ENCODE measurements at regions of chr17 and their contacts with region 1.

Region 1: GRCh38 chr17:74961657-74962490 is 10.7 kb downstream of the HID1 start:
- DNase-seq: peak; percentile 86 to 97 (median 91)
- H3K4me3 ChIP-seq: no peak overlapping the region
- H3K27ac ChIP-seq: no peak overlapping the region
- H3K4me1 ChIP-seq: no peaks in the 10 kb centered on the region
- H3K27me3 ChIP-seq: no peaks in the 10 kb centered on the region
- CTCF ChIP-seq: peak; percentile 73 to 88 (median 86)
- POLR2A ChIP-seq: no peak

Region 2: DNA sequence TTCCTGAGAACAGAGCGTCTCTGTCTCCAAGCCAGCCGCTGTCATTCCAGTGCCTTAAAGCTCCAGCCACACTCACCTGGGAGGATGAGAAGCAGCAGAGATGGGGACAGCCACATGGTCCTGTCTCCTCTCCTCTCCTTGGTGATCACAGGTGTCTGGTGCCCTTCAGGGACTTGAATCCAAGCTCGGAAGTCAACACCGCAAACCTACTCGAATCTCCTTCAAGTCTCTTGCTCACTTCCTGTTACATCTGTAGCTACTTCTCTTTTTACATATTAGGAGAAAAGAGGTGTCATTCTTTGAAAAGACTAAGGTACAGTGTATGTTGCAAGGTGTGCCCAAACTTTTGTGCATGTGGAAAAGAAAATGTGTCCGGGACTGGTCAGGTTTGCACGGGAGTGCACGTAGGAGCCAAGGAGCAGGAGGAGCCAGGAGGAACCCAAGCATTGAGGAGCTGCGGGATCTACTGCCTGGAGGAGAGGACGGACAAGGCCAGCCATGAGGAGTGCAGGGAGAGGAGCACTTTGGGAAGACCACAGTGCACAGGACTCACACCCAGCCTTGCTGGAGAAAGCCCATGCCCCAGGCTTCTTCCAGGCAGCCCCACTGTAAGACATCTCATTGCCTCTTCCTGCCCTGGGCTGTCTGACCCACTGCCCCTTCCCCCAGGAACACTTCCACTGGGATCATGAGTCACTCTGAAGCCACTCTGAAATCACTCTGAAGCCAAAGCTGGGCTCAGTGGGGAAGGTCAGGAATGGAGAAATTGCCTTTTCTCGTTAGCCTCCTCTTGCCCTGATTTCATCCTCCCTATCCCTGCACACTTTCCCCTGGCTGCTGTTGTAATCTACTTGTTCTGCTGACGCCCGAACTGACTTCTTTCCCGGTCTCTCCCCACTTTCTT is 369.5 kb before region 1 on chr17 and contains the start of gene CD300LD:
- intact Hi-C with region 1: no loop called
- DNase-seq: no peak
- H3K4me3 ChIP-seq: no peak within 1 kb of the TSS
- H3K27ac ChIP-seq: no peak within 1 kb of the TSS
- H3K4me1 ChIP-seq: no peaks in the 10 kb centered on the region
- H3K27me3 ChIP-seq: peaks cover 5% of the 10 kb centered on the region
- CTCF ChIP-seq: no peak
- POLR2A ChIP-seq: no peak
- total RNA-seq, gene CD300LD: not detected

Region 3: DNA sequence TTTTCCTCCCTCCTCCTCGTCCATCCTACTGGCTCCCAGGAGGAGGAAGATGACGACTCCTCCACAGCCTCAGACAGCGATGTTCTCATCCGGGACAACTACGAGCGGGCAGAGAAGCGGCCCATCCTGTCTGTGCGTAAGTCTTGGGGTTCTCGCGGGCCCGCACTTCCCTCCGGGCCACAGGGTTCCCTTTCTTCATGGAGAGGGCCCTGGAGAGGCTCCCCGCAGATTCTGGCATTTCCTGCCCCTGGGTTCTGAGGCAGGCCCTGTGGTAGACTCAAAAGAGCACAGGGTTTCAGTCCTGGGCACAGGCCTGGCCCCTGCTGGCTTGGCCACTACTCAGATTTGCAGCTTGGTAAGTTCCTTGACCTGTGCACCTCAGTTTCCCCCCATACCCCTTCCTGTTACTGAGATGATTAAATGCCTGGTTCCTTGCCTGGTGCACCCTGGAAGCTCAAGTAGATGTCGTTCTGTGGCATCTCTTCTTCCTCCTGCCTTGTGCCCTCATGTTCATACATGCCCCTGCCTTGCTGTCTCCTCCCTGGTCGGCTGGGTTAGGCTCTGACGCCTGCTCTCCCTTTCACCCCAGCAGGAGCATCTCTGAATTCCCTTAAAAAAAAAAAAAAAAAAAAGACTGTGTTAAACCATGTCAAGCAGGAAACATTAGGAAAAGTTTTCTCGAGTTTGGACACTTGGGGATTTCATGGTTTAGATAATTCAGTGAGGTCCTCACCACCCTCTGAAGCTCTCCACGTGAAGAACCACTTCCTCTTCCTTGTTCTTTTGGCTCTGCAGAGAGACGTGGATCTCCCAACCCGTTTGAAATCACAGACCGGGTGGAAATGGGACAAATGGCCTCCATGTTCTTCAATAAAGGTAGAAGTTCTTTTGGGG is 171.5 kb before region 1 on chr17:
- intact Hi-C with region 1: loop called (anchors 5 to 10 kb)
- DNase-seq: no peak
- H3K4me3 ChIP-seq: no peak overlapping the region
- H3K27ac ChIP-seq: no peak overlapping the region
- H3K4me1 ChIP-seq: no peaks in the 10 kb centered on the region
- H3K27me3 ChIP-seq: no peaks in the 10 kb centered on the region
- CTCF ChIP-seq: no peak
- POLR2A ChIP-seq: no peak

Region 4: DNA sequence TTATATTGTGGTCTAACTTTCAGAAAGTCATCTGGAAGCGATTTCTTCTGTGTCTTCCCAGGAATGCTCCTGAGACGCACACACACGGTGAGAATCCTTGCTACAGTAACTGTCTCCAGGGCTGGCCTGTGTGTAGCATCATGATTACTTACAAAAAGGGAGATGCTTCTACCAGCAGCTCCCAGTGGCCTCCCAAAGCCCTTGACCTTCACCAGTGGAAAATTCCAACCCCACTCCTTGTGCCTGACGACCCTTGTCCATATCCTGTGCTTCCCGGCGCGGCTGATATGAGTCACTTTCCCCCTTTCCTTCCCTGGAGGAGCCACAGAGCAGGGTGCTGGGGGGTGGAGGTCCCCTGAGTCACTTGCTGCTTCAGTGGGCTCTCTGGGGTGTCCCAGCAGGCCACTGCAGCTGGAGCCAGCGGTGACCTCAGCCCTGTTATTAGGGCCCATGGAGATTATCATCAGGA is 163.6 kb before region 1 on chr17:
- intact Hi-C with region 1: loop called (anchors 5 to 10 kb)
- DNase-seq: peak in 1 of 7 donors; percentile 25
- H3K4me3 ChIP-seq: no peak overlapping the region
- H3K27ac ChIP-seq: no peak overlapping the region
- H3K4me1 ChIP-seq: peaks cover 0 to 3% of the 10 kb centered on the region in 2 donors
- H3K27me3 ChIP-seq: no peaks in the 10 kb centered on the region
- CTCF ChIP-seq: no peak
- POLR2A ChIP-seq: no peak

Region 5: GRCh38 chr17:74923533-74924249 is 38.2 kb before region 1 on chr17:
- intact Hi-C with region 1: loop called (anchors 5 kb)
- DNase-seq: peak; percentile 56 to 81 (median 75)
- H3K4me3 ChIP-seq: peak overlapping the region in 2 of 4 donors; percentile 24 to 65
- H3K27ac ChIP-seq: no peak overlapping the region
- H3K4me1 ChIP-seq: peaks cover 13 to 20% of the 10 kb centered on the region in 2 donors
- H3K27me3 ChIP-seq: peaks cover 24% of the 10 kb centered on the region
- CTCF ChIP-seq: peak; percentile 50 to 88 (median 72)
- POLR2A ChIP-seq: no peak

Region 6: GRCh38 chr17:75006653-75007052 is 44.8 kb after region 1 on chr17:
- intact Hi-C with region 1: loop called (anchors 5 kb)
- DNase-seq: peak in 4 of 7 donors; percentile 31 to 55 (median 45)
- H3K4me3 ChIP-seq: no peak overlapping the region
- H3K27ac ChIP-seq: no peak overlapping the region
- H3K4me1 ChIP-seq: peaks cover 0 to 4% of the 10 kb centered on the region in 2 donors
- H3K27me3 ChIP-seq: no peaks in the 10 kb centered on the region
- CTCF ChIP-seq: peak in 5 of 6 experiments; percentile 21 to 41 (median 34)
- POLR2A ChIP-seq: no peak

Region 7: DNA sequence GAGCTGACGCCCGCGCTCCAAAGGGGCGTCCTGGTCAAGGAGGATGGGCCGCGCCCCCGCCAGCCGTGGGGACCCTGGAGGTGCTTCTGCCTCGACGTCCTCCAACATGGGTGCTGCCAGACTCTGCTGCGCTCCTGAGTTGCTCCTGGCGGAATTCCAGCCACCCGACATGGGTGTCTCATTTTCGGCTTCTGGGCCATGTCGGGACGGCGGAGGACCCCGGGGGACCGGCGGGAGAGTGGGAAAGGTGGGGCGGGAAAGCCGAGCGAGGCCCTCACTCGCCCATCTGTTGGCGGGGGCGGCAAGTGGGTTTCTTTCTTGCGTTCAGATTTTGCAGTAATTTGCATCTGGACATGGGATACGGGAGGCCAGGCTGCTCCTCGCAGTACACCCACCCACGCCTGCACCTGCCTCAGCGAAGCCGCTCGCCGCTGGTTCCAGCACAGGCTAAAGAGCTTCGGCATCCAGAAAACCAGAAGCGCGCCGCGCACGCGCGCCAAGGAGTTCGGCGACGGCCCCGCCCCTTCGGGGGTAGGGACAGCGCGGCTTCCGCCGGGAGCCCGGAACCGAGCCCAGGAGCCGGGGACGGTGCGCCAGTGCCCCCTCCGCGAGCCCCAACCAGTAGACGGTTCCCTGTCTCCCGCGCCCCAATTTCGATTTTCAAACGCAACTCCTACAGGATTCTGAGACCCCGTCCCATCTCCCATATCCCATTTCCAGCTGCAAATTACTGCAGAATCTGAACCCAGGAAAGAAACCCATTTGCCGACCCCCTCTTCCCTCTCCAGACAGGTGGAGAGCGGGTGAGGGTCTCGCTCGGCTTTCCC is 147.7 kb after region 1 on chr17 and contains the start of gene ARMC7:
- intact Hi-C with region 1: loop called in 1 of 2 experiments (anchors 10 kb)
- DNase-seq: peak; percentile 84 to 93 (median 89)
- H3K4me3 ChIP-seq: peak within 1 kb of the TSS in 3 of 4 donors; percentile 51 to 92 (median 85)
- H3K27ac ChIP-seq: peak within 1 kb of the TSS in 2 of 5 donors; percentile 60 to 65
- H3K4me1 ChIP-seq: peaks cover 0 to 25% of the 10 kb centered on the region in 2 donors
- H3K27me3 ChIP-seq: no peaks in the 10 kb centered on the region
- CTCF ChIP-seq: no peak
- POLR2A ChIP-seq: peak in 1 of 2 donors; percentile 52
- total RNA-seq, gene ARMC7: 3.7 to 13.8 (median 8.8) TPM

Region 8: GRCh38 chr17:75199886-75200618 is 238.2 kb after region 1 on chr17:
- intact Hi-C with region 1: loop called in 1 of 2 experiments (anchors 5 kb)
- DNase-seq: no peak
- H3K4me3 ChIP-seq: no peak overlapping the region
- H3K27ac ChIP-seq: no peak overlapping the region
- H3K4me1 ChIP-seq: peaks cover 0 to 5% of the 10 kb centered on the region in 2 donors
- H3K27me3 ChIP-seq: no peaks in the 10 kb centered on the region
- CTCF ChIP-seq: no peak
- POLR2A ChIP-seq: no peak

Region 9: GRCh38 chr17:75652915-75653549 is 691.2 kb after region 1 on chr17:
- intact Hi-C with region 1: no loop called
- DNase-seq: no peak
- H3K4me3 ChIP-seq: no peak overlapping the region
- H3K27ac ChIP-seq: no peak overlapping the region
- H3K4me1 ChIP-seq: no peaks in the 10 kb centered on the region
- H3K27me3 ChIP-seq: no peaks in the 10 kb centered on the region
- CTCF ChIP-seq: peak; percentile 32 to 53 (median 40)
- POLR2A ChIP-seq: no peak

Measured in adrenal gland (tissue), 19 donors.